GM10248 (cell line): ENCODE measurements at regions of chr6 and their contacts with region 1.

Region 1: DNA sequence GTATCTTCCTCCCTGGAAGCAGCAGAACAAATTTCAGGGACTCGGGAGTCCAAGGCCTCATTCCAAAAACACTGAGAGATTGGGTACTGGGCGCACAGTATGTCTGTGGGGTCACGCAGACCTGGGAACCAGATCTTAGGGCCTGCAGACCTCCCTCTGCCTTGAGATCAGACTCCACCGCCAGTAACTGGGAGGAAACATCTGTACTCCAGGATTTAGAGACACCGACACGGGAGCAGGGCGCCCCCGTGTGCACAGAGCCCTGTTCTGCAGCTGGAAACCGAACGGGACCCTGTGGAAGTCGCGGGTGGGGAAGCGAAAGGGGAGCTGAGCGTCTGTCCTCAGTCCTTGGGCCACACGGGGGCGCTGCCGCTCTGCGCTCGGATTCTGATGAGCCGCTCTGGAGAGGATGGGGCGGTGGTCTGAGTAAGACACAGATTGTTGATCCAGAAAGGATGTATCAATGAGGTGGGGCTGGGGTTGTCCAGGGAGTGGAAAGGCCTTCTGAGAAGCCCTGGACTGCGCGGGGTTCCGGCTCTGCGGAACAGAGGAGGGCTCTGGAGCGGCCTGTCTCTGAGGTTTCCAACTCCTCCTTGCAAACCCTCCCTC is 35.7 kb upstream of the HLA-E start:
- DNase-seq: peak; percentile 91
- CTCF ChIP-seq: peak; percentile 82

Region 2: DNA sequence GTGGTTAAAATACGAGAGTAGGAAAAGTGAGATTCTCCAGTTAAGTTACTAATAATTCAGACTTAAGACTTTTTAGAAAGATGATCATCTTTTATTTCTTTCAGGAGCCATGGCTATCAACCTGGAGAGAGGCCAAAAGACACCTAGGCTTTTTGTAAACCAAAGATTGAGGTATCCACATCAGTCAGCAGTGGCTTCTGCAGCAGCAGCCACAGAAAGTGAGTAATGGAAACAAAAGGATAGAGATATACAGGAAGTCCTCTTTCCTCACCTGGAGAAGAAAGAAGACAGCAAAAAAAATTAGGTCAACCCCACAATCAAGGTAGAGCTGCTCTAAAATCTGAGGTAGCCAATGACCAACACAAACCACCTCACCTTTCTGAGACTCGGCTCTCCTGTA is 149.6 kb before region 1 on chr6:
- CTCF ChIA-PET with region 1: no interaction called
- POLR2A ChIA-PET with region 1: no interaction called
- DNase-seq: no peak
- CTCF ChIP-seq: no peak

Region 3: GRCh38 chr6:30463651-30464618 is 10.3 kb after region 1 on chr6:
- CTCF ChIA-PET with region 1: interaction called, 75 read pairs
- POLR2A ChIA-PET with region 1: no interaction called
- DNase-seq: no peak
- CTCF ChIP-seq: no peak

Region 4: DNA sequence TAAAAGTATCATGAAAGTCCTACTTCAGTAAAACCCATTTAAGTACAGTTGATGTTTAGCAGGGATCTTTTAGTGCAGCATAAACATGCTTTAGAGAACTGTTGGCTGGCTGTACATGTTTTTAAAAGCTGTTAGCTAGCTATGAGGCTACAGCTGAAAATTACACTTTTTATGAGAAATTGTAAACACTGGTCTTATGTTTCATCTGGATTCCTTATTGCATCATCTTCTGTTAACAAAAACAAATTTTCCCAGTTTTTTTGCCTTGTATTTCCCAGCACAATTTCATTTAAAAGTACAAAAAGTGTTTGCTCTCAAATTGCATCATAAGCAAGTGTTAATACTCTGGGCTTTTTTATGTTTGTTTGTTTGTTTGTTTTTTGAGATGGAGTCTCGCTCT is 17.4 kb after region 1 on chr6:
- CTCF ChIA-PET with region 1: interaction called, 75 read pairs
- POLR2A ChIA-PET with region 1: no interaction called
- DNase-seq: no peak
- CTCF ChIP-seq: no peak

Region 5: GRCh38 chr6:30600451-30600961 is 146.9 kb after region 1 on chr6:
- CTCF ChIA-PET with region 1: interaction called, 12 read pairs
- POLR2A ChIA-PET with region 1: no interaction called
- DNase-seq: no peak
- CTCF ChIP-seq: no peak